ENCODE measurements at regions of chr18 and their contacts with region 1.

Region 1: DNA sequence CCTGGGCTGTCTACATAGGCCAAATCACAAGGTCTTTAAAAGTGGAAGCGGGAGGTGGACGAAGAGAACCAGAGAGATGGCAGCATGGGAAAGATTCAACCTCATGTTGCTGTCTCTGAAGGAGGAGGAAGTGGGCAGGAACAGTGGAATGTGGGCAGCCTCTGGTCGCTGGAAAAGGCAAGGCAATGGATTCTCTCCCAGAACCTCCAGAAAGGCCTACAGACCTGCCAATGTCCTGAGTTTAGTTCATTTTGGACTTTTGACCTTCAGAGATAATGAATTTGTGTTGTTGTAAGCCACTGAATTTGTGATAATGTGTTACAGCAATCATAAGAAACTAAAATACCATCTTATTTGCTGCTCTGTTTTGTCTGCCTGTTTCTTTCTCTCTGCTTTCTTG is 122.5 kb downstream of the RNF152 start:
- DNase-seq: no peak
- H3K4me3 ChIP-seq: no peak overlapping the region
- H3K27ac ChIP-seq: no peak overlapping the region
- H3K4me1 ChIP-seq: no peaks in the 10 kb centered on the region
- H3K27me3 ChIP-seq: no peaks in the 10 kb centered on the region
- CTCF ChIP-seq: no peak
- POLR2A ChIP-seq: no peak

Region 2: DNA sequence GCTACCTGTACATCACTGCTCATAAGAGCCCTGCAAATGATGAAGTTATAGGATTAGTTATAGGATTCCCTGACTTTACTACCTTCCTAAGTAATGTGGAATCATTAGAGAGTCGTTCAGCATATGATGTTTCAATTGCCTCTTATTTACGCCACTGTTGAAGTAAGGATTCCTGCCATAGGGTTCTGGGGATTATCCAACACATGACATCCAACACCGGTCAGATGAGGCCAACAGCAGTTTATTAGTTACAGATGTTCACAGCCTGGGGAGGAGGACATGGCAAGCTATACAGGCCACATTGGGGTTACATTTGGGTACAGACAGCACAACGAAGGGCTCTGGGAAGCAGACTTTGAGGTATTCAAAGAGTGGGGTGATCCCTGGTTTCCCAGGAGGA is 1263.6 kb before region 1 on chr18:
- intact Hi-C with region 1: loop called (anchors 5 kb)
- DNase-seq: no peak
- H3K4me3 ChIP-seq: no peak overlapping the region
- H3K27ac ChIP-seq: no peak overlapping the region
- H3K4me1 ChIP-seq: no peaks in the 10 kb centered on the region
- H3K27me3 ChIP-seq: no peaks in the 10 kb centered on the region
- CTCF ChIP-seq: no peak
- POLR2A ChIP-seq: no peak

Region 3: DNA sequence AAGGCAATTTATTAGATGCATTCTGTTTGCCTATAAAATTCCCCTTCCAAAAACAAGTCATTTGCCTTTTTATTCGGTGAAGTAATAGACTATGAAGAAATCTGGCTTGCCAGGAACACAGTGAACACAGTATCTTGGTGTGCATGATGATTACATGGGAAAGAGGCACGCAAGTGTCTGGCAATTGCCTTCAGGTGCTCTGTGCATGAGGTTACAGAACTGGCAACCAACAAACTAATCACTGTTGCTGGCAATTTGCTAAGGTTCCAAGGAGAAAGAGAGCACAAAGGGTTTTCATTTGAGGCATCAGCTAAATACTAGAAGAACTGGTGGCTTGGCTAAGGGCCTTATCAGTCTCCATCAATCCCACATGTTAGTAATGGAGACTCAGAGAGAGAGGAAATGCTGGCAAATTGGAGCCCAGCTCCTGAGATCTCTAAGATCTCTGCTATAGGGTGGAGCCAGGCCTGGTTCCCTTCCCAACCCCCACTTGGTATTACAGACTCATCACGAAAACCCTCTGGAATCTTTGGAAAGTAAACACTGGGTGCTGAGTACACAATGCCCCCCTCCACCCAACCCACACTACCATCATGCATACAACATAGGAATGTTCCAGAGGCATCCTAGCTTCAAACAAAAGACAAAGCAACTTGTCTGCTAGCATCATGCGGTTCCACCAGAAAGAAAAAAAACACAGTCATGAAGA is 112.2 kb after region 1 on chr18:
- intact Hi-C with region 1: no loop called
- DNase-seq: no peak
- H3K4me3 ChIP-seq: no peak overlapping the region
- H3K27ac ChIP-seq: no peak overlapping the region
- H3K4me1 ChIP-seq: peaks cover 9% of the 10 kb centered on the region
- H3K27me3 ChIP-seq: no peaks in the 10 kb centered on the region
- CTCF ChIP-seq: no peak
- POLR2A ChIP-seq: no peak

Region 4: DNA sequence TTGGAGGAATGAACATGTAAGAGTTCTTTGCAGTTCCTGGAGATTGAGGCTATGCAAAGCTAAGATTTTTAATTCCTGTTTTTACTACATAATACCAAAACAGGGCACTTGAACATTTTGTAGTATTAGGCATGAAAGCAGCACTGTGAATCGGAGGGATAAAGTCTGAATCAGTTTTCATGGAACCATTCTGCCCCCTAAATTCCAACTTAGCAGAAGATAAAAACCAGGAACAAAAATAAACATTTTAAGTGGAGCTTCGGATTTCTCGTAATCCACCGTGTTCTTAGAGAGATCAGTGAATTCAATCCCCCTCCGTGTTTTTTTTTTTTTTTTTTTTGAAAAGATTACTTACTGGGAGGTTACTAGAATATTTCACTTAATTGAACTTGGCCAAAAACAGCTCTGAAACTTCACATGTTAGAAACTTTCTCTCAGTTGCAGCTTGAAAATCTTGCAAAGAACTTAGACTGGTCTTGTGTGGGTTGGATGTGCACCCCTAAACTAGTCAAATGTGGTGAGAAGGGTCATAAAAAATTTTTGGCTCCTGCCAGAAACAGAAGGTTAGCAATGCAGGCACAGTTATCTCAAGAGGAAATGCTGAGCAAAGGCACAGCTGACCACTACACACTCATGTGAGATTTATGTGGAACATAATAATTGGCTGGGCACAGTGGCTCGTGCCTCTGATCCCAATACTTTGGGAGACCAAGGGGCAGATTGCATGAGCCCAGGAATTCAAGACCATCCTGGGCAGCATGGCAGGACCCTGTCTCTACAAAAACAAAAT is 267.9 kb after region 1 on chr18:
- intact Hi-C with region 1: no loop called
- DNase-seq: no peak
- H3K4me3 ChIP-seq: no peak overlapping the region
- H3K27ac ChIP-seq: no peak overlapping the region
- H3K4me1 ChIP-seq: peaks cover 12% of the 10 kb centered on the region
- H3K27me3 ChIP-seq: no peaks in the 10 kb centered on the region
- CTCF ChIP-seq: no peak
- POLR2A ChIP-seq: no peak